Activated naive CD4-positive, alpha-beta T cell treated with anti-CD3 and anti-CD28 coated beads for 36 hours (primary cell): ENCODE measurements at regions of chr10 and their contacts with region 1.

Region 1: GRCh38 chr10:23067939-23068775 is 27.2 kb upstream of the MSRB2 start:
- DNase-seq: peak; percentile 79
- H3K4me3 Mint-ChIP-seq: no peak overlapping the region
- H3K27ac Mint-ChIP-seq: no peak overlapping the region
- H3K4me1 Mint-ChIP-seq: no peaks in the 10 kb centered on the region
- H3K27me3 Mint-ChIP-seq: peaks cover 2% of the 10 kb centered on the region

Region 2: DNA sequence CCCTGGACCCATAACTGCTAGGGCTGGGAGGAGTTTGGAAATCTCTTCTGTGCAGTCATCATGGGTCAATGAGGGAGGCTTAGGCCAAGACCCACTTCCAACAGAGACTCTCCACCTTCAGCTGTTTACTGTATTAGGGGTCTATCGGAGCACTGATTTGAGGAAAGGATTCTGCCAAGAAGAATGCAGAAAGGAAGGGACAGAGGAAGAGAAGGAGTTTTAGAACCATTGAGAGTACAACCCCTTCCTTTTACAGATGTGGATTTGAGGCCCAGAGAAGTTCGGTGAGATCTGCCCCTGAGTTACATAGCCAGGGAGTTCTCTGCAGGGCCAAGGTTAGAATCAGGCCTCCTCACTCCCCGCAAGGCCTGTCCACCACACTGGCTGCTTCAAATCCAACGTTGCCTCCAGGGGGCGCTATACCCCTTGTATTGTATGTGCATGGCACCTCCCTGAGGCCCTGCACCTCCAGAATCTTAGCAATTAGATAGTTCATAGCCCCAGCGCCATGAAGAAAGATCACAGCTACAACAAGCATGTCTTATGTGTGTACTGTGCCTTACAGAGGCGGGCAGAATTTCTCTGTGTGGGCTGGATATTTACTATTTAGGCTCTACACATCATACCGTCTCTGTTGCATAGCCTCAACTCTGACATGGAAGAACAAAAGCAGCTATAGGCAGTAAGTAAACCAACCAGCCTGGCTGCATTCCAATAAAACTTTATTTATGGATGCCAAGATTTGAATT is 1789.5 kb before region 1 on chr10:
- CTCF ChIA-PET with region 1: no interaction called
- intact Hi-C with region 1: loop called (anchors 5 kb)
- DNase-seq: peak; percentile 92
- H3K4me3 Mint-ChIP-seq: no peak overlapping the region
- H3K27ac Mint-ChIP-seq: no peak overlapping the region
- H3K4me1 Mint-ChIP-seq: no peaks in the 10 kb centered on the region
- H3K27me3 Mint-ChIP-seq: no peaks in the 10 kb centered on the region

Region 3: DNA sequence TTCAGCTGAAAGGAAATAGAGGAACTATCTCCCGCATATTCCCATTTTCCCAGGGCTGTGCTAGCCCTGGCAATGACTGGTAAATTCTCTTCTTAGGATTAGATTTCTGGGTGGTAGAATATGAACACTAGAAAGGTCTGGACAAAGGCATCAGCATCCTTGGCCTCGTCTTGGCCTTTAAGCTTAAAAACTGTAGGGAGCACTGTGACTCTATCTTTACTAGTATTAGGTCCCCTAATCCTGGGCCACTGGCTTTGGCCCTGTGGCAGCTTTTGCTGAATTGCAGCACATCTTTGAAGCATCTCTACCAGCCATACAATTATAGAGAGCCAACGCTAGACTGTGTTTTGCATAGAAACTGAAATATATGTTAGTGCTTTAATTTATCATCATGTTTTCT is 808.9 kb before region 1 on chr10:
- CTCF ChIA-PET with region 1: no interaction called
- intact Hi-C with region 1: loop called (anchors 1 kb)
- DNase-seq: peak; percentile 40
- H3K4me3 Mint-ChIP-seq: no peak overlapping the region
- H3K27ac Mint-ChIP-seq: no peak overlapping the region
- H3K4me1 Mint-ChIP-seq: peaks cover 25% of the 10 kb centered on the region
- H3K27me3 Mint-ChIP-seq: peaks cover 4% of the 10 kb centered on the region

Region 4: GRCh38 chr10:22420787-22421517 is 647.2 kb before region 1 on chr10:
- CTCF ChIA-PET with region 1: no interaction called
- intact Hi-C with region 1: loop called (anchors 5 kb)
- DNase-seq: no peak
- H3K4me3 Mint-ChIP-seq: no peak overlapping the region
- H3K27ac Mint-ChIP-seq: no peak overlapping the region
- H3K4me1 Mint-ChIP-seq: no peaks in the 10 kb centered on the region
- H3K27me3 Mint-ChIP-seq: no peaks in the 10 kb centered on the region

Region 5: GRCh38 chr10:22550732-22551131 is 517.4 kb before region 1 on chr10:
- CTCF ChIA-PET with region 1: no interaction called
- intact Hi-C with region 1: loop called (anchors 5 kb)
- DNase-seq: peak; percentile 77
- H3K4me3 Mint-ChIP-seq: no peak overlapping the region
- H3K27ac Mint-ChIP-seq: no peak overlapping the region
- H3K4me1 Mint-ChIP-seq: peaks cover 3% of the 10 kb centered on the region
- H3K27me3 Mint-ChIP-seq: no peaks in the 10 kb centered on the region

Region 6: GRCh38 chr10:22573820-22574569 is 494.2 kb before region 1 on chr10:
- CTCF ChIA-PET with region 1: no interaction called
- intact Hi-C with region 1: loop called (anchors 1 kb)
- DNase-seq: peak; percentile 44
- H3K4me3 Mint-ChIP-seq: no peak overlapping the region
- H3K27ac Mint-ChIP-seq: peak overlapping the region; percentile 1
- H3K4me1 Mint-ChIP-seq: peaks cover 37% of the 10 kb centered on the region
- H3K27me3 Mint-ChIP-seq: no peaks in the 10 kb centered on the region